ENCODE measurements at regions of chr18 and their contacts with region 1.

Region 1: DNA sequence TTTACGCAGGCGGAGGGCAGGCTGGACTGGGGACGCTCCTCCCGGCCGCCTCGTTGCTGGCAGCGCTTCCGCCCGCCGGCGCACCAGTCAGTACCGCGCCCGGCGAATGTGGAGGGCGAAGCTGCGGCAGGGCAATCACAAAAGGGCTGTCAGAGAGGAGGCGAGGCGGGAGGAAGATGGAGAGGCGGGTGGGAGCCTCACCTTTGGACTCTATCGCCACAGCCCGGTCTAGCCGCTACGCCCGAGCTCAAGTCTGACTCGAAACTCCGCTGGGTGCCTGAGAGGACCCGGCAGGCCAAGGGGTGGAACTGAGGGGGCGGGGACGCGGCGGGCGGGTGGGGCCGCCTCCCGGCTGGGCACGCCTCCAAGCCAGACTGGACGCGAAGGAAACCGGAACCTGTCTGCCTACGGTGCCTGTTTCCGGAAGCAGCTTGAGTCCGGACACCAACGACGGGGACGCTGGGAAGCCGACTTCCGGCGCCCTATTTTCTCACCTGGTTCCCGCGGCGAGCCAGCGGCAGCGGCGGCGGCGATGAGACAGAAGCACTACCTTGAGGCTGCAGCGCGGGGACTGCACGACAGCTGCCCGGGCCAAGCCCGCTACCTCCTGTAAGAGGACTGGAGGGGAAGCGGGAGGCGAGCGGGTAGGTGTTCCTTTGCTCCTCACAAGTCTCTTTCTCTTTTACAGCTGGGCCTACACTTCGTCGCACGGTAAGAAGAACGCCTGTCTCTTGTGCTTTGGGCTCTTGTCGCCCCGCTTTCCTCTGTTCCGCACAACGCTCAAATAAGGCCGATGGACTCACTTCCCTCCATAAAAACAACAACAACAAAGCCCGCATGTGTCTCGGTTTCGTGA is at the start of gene RMP24:
- DNase-seq: peak; percentile 96
- H3K4me3 Mint-ChIP-seq: peak within 1 kb of the TSS; percentile 97
- H3K27ac Mint-ChIP-seq: peak within 1 kb of the TSS; percentile 96
- H3K4me1 Mint-ChIP-seq: peaks cover 48% of the 10 kb centered on the region
- H3K27me3 Mint-ChIP-seq: no peaks in the 10 kb centered on the region

Region 2: GRCh38 chr18:34867520-34867919 is 1104.9 kb before region 1 on chr18:
- CTCF ChIA-PET with region 1: no interaction called
- intact Hi-C with region 1: loop called (anchors 5 kb)
- DNase-seq: no peak
- H3K4me3 Mint-ChIP-seq: no peak overlapping the region
- H3K27ac Mint-ChIP-seq: peak overlapping the region; percentile 53
- H3K4me1 Mint-ChIP-seq: peaks cover 51% of the 10 kb centered on the region
- H3K27me3 Mint-ChIP-seq: no peaks in the 10 kb centered on the region

Region 3: GRCh38 chr18:35290073-35290735 is 682.2 kb before region 1 on chr18 and contains the start of gene ZSCAN30:
- CTCF ChIA-PET with region 1: no interaction called
- intact Hi-C with region 1: loop called (anchors 1 kb)
- DNase-seq: peak; percentile 96
- H3K4me3 Mint-ChIP-seq: peak within 1 kb of the TSS; percentile 96
- H3K27ac Mint-ChIP-seq: peak within 1 kb of the TSS; percentile 97
- H3K4me1 Mint-ChIP-seq: peaks cover 48% of the 10 kb centered on the region
- H3K27me3 Mint-ChIP-seq: peaks cover 2% of the 10 kb centered on the region
- total RNA-seq, gene ZSCAN30: 12.0 to 14.3 TPM

Region 4: DNA sequence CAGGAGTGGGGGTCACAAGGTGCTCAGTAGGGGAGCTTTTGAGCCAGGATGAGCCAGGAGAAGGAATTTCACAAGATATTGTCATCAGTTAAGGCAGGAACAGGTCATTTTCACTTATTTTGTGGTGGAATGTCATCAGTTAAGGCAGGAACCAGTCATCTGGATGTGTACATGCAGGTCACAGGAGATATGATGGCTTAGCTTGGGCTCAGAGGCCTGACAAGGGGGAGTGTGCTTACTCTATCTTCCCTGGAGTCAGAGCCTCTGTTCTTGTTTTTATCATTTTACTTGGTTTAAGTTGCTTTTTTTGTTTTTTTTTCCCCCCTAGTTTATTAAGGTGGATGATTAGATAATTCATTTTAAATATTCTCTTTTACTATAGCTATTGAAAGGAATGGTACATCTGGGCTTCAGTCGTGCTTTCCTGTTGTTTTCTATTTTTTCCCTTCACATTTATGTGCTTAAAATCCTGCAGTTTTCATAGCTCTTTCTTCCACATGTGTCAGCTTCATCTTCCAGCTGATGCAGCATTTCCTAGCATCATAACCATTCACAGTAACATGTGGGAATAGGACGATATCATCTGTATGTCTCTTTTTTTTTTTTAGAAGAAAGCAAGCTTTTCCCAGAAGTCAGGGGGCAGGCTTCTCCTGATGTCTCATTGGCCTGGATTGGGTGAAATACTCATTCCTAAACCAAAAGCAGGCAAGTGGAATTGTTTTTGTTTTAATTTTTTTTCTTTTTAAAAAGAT is 610.7 kb before region 1 on chr18:
- CTCF ChIA-PET with region 1: no interaction called
- intact Hi-C with region 1: no loop called
- DNase-seq: no peak
- H3K4me3 Mint-ChIP-seq: no peak overlapping the region
- H3K27ac Mint-ChIP-seq: no peak overlapping the region
- H3K4me1 Mint-ChIP-seq: no peaks in the 10 kb centered on the region
- H3K27me3 Mint-ChIP-seq: no peaks in the 10 kb centered on the region

Region 5: GRCh38 chr18:35386600-35387351 is 585.6 kb before region 1 on chr18:
- CTCF ChIA-PET with region 1: no interaction called
- intact Hi-C with region 1: loop called (anchors 10 kb)
- DNase-seq: peak; percentile 81
- H3K4me3 Mint-ChIP-seq: no peak overlapping the region
- H3K27ac Mint-ChIP-seq: no peak overlapping the region
- H3K4me1 Mint-ChIP-seq: peaks cover 2% of the 10 kb centered on the region
- H3K27me3 Mint-ChIP-seq: peaks cover 23% of the 10 kb centered on the region

Region 6: GRCh38 chr18:35484034-35484433 is 488.4 kb before region 1 on chr18:
- CTCF ChIA-PET with region 1: no interaction called
- intact Hi-C with region 1: loop called (anchors 5 kb)
- DNase-seq: no peak
- H3K4me3 Mint-ChIP-seq: no peak overlapping the region
- H3K27ac Mint-ChIP-seq: no peak overlapping the region
- H3K4me1 Mint-ChIP-seq: peaks cover 60% of the 10 kb centered on the region
- H3K27me3 Mint-ChIP-seq: no peaks in the 10 kb centered on the region

Region 7: DNA sequence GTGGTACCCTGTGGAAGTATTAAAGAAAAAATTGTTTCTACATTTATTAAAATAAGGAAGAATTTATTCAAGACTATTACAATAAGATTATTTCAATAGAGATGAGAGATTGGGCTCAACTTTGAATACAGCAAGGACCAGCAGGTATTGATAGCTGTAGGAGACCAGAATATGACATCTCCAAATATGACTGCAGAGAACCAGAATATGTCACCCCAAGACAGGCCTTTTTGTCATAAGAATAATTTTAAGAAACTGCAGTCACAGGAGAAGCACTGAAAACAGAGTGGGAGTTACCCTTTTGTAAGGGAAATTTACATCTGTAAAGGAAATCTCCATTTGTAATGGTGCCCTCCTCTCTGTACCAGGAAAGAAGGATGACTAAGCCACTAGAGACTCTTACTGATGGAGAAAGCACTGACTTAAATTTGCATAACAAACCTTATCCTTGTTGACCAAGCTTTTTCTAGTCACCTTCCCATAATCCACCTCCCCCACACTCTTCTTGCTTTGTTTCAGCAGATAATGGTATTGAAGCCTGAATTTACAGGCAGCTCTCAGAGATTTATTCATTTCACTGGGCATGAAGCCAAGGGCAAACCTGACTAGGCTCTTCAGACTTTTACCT is 145.0 kb before region 1 on chr18:
- CTCF ChIA-PET with region 1: no interaction called
- intact Hi-C with region 1: loop called (anchors 1 kb)
- DNase-seq: peak; percentile 62
- H3K4me3 Mint-ChIP-seq: no peak overlapping the region
- H3K27ac Mint-ChIP-seq: peak overlapping the region; percentile 75
- H3K4me1 Mint-ChIP-seq: peaks cover 15% of the 10 kb centered on the region
- H3K27me3 Mint-ChIP-seq: peaks cover 22% of the 10 kb centered on the region

Region 8: DNA sequence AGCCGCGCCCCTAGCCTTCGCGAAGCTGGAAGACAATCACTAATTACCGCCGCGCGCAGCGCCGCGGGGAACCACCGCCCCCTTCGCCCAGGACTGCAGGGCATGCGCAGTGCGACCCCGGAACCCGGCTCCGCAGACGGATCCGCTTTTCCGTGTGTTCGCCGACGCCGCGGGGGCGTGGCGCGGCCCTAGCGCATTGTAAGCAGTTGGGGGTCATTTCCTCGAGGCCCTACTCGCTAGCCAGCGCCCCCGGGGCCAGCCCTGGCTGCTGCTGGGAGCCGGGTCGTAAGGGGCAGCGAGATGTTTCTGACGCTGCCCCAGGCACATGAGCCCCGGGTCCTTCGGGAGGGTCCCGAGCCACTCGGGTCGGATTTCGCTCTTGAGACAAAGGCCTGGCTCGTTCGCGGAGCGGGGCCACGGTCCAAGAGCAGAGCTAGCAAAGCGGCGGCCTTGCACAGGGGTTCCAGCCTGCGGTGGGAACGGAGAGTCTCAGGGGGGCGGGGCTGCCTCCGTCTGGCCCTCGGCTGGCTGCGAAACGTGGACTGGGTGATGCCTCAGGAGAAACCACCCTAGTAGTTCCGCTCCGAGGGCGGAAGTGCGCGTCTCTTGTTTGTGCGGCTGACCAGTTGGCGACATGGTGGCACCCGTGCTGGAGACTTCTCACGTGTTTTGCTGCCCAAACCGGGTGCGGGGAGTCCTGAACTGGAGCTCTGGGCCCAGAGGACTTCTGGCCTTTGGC is 157.0 kb after region 1 on chr18 and contains the starts of genes ELP2 and SLC39A6:
- CTCF ChIA-PET with region 1: interaction called, 3 read pairs
- intact Hi-C with region 1: loop called (anchors 1 kb)
- DNase-seq: peak; percentile 94
- H3K4me3 Mint-ChIP-seq: peak within 1 kb of the TSS; percentile 91
- H3K27ac Mint-ChIP-seq: peak within 1 kb of the TSS; percentile 92
- H3K4me1 Mint-ChIP-seq: peaks cover 61% of the 10 kb centered on the region
- H3K27me3 Mint-ChIP-seq: no peaks in the 10 kb centered on the region
- total RNA-seq, gene ELP2: 90.1 to 92.0 TPM
- total RNA-seq, gene SLC39A6: 15.4 to 15.7 TPM

Measured in activated naive CD4-positive, alpha-beta T cell treated with anti-CD3 and anti-CD28 coated beads for 36 hours (primary cell).